ENCODE measurements at regions of chr14 and their contacts with region 1.

Region 1: DNA sequence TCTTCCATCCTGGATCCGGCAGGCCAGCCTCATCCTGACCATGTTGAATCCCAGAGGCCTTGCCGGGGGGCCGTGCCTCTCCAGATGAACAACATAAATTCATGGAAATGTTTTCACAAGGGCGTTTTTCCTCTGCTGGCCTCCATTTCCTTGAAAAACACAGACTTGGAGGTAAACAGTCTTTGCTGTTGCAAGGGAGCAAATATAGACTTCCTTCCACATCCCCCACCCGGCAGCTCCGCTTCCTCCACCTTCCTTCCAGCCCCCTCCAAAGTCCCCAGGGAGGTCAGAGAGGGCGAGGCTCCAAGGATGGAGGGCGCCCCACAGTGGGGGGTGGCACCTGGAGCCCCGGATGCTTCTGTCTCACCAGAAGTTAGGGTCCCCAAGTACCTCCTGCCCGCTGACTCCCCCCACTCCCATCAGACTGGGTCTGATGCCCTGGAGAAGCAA is 31.0 kb downstream of the CALM1 start:
- DNase-seq: no peak
- H3K4me3 ChIP-seq: no peak overlapping the region
- CTCF ChIP-seq: no peak
- POLR2A ChIP-seq: no peak

Region 2: DNA sequence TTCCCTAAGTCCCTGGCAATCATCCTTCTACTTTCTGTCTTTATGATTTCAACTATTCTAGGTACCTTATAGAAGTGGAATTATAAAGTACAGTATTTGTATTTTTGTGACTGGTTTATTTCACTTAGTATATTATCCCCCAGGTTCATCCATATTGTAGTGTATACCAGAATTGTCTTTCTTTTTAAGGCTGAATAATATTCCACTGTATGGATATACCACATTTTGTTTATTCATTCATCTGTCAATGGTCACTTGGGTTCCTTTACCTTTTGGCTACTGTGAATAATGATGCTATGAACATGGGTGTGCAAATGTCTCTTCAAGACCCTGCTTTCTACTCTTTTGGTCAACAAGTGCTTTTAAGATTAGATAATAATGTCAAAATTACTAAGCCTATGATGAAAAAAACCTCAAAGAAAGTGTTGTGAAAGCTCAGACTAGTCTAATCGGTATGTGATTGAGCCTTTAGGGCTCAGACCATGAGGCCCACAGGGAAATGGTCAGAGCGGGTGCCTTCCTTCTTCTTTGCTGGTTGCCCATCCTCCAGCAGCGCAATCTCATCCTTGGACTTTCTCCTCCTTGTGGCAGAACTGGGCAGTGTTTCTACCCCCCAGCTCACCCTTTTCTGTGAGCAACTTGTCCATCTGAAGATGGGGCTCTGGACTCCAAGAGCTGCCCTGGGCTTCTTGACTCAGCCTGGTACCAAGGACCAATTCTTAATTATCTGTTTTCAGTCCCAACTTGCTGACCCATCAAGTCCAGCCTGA is 1498.0 kb before region 1 on chr14:
- intact Hi-C with region 1: no loop called
- DNase-seq: peak in 1 of 2 donors; percentile 64
- H3K4me3 ChIP-seq: no peak overlapping the region
- CTCF ChIP-seq: no peak
- POLR2A ChIP-seq: no peak

Region 3: DNA sequence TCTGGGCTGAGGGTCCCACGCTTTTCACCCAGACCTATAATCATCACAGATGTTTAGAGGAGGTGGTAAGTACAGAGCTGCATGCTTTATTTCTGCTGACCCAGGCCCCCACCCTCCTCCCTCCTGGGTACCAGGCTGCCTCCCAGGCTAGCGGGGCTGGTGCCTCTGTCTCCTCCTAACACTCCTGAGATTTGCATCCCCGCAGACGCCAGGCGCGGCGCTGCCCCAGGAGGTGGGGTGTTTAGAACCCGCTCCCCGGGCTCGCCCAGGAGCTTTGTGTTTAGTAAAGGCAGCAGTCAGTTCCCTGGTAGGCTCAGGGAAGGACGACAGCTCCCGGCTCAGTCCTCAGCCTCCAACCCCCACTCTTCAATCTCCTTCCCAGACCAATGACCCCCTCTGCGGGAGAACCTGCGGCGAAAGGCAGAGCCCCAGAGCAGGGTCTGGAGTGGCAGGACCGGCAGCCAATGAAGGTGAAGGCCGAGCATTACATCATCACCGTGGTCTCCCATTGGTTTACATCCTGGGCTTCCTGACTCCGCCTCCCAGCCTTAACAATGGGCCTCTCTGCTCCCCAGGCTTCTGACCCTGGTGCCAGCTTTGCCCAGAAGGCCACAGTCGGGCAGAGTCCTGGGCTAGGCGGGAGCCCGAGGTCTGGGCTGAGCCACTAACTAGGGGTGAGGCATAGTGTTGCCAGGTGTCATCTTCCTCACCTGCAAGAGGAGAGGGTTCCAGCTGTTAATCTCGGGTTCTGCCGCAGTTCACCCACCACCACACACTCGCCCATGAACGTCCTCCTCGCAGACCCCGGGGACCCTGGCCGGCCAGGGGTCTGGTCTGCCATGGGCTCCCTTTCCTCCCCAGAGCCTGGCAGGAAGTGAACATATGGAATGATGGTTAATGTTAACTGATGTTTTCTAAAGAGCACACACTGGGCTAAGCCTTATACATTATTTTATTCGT is 26.5 kb after region 1 on chr14:
- intact Hi-C with region 1: loop called (anchors 1 kb)
- DNase-seq: peak; percentile 24 to 81
- H3K4me3 ChIP-seq: no peak overlapping the region
- CTCF ChIP-seq: no peak
- POLR2A ChIP-seq: no peak

Measured in lower leg skin (tissue), 4 donors.